Left colon (tissue), 2 donors: ENCODE measurements at regions of chr21 and their contacts with region 1.

Region 1: GRCh38 chr21:42594616-42595282 is 58.7 kb upstream of the PDE9A start:
- DNase-seq: no peak
- ATAC-seq: no peak

Region 2: DNA sequence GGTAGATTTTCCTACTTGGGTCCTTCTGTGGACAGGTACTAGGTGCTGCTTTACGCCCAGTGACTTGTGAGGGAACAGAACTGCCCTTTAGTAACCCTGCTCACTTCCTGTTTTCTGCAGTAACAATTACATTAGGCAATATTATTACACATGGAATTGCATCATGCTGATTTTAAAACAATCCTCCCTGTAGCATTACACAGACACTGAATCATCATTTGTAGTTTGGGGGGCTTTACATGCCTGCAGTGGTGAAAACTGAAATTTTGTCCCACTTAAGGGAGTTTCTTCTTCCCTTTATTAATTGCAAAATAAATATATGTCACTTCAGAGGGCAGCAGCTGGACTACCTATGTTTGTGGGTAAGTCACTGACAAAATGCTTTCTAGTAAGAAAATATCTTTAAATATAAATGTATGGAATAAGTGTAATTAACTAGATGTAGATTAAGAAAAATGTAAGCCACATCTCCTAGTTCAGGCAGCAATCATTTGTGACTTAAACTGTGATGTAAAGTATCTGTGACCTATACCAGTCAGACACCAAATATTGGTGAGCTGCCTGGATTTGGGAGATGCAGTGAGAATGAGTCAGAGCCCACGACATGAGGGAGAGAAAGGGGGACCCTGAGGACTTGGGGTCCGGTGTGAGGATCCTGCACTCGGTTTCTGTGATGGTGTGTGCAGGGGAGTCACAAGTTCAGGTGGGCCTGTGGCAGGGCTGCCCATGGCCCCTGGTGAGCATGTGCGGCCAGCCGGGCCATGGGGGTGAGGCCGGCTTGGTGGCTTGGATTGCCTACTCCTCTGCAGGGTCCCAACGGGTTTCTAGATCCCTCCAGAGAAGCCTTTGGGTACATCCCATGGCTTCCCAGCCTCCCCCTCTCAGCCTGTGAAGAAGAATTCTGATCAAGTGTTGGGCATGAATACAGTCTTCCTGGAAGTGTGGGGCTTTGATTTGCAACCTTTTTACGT is 395.0 kb before region 1 on chr21:
- intact Hi-C with region 1: no loop called
- DNase-seq: peak in 1 of 2 donors; percentile 53
- ATAC-seq: peak; percentile 87

Region 3: GRCh38 chr21:42818328-42818749 is 223.6 kb after region 1 on chr21:
- intact Hi-C with region 1: loop called in 1 of 2 experiments (anchors 5 kb)
- DNase-seq: peak in 1 of 2 donors; percentile 71
- ATAC-seq: peak; percentile 85